ENCODE measurements at regions of chr19 and their contacts with region 1.

Region 1: GRCh38 chr19:6516659-6517291 is 14.1 kb upstream of the TNFSF9 start:
- DNase-seq: no peak
- ATAC-seq: peak; percentile 83
- H3K4me3 ChIP-seq: peak overlapping the region; percentile 92
- H3K27ac ChIP-seq: peak overlapping the region; percentile 98
- H3K4me1 ChIP-seq: peaks cover 33% of the 10 kb centered on the region
- H3K27me3 ChIP-seq: no peaks in the 10 kb centered on the region
- CTCF ChIP-seq: peak; percentile 96 to 99 (median 97); a peak in 5 of 6 replicates
- EP300 ChIP-seq: 0 out of 4 replicates have a peak, but pooled peaks of 1 of the 2 experiments have one; percentile 13
- POLR2A ChIP-seq: peak; percentile 63; the same call in 1 of the 2 replicates
- RAD21 ChIP-seq: peak; percentile 100

Region 2: GRCh38 chr19:6481541-6482342 is 35.0 kb before region 1 on chr19 and contains the start of gene DENND1C:
- CTCF ChIA-PET with region 1: interaction called, 3 read pairs
- POLR2A ChIA-PET with region 1: interaction called, 7 read pairs
- RAD21 ChIA-PET with region 1: interaction called, 20 read pairs
- SMC1A ChIA-PET with region 1: interaction called, 4 read pairs
- in situ Hi-C with region 1: no loop called
- intact Hi-C with region 1: no loop called
- DNase-seq: peak; percentile 45
- ATAC-seq: peak; percentile 95
- H3K4me3 ChIP-seq: peak within 1 kb of the TSS; percentile 69
- H3K27ac ChIP-seq: peak within 1 kb of the TSS; percentile 93
- H3K4me1 ChIP-seq: peaks cover 10% of the 10 kb centered on the region
- H3K27me3 ChIP-seq: no peaks in the 10 kb centered on the region
- CTCF ChIP-seq: peak; percentile 51 to 64 (median 61); a peak in 4 of 6 replicates
- EP300 ChIP-seq: no peak
- POLR2A ChIP-seq: peak; percentile 82
- RAD21 ChIP-seq: peak; percentile 53
- polyA plus RNA-seq, gene DENND1C: 2.4 to 2.8 TPM

Region 3: DNA sequence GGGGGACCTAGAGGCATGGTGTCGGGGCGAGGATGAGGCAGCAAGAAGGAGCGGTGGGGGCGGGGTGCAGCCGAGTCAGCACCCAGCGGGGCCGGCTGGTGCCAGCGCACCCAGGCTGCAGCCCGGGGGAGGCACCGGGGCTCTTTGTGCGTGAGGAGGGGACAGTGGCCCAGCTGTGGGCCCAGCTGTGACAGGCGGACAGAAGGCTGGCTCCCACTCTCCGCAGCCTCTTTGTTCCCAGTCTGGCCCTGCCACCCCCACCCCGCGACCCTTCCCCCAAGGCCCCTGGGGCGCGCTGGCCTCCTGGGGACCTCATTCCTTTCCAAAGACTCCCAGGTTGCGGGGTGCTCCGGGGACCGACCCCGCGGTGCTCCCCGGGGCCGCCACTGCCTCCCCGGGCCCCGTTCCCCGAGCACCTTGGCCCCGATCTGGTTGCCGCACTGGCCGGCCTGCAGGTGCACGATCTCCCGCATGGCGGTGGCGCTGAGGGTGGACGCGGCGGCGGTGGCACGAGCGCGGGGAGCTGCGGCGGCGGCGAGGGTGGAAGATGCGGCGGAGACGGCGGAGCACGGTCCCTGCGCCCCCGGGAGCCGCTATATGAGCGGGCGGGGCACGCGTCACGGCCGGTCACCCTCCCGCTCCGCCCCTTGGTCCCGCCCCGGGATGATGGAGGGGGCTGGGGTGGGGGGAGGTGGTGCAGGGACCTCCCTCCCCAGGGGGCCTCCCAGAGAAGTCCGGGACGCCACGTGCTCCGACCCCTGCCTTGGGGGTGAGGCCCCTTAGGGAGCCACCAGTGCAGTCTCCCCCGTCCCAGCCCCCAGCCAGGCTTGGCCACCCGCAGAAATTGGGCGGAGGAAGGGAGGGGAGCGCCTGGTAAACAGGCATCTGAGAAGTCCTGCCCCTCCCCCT is 14.8 kb before region 1 on chr19 and contains the start of gene TUBB4A:
- CTCF ChIA-PET with region 1: no interaction called
- POLR2A ChIA-PET with region 1: no interaction called
- RAD21 ChIA-PET with region 1: no interaction called
- SMC1A ChIA-PET with region 1: no interaction called
- in situ Hi-C with region 1: no loop called
- intact Hi-C with region 1: no loop called
- DNase-seq: no peak
- ATAC-seq: peak; percentile 77
- H3K4me3 ChIP-seq: peak within 1 kb of the TSS; percentile 71
- H3K27ac ChIP-seq: no peak within 1 kb of the TSS
- H3K4me1 ChIP-seq: peaks cover 2% of the 10 kb centered on the region
- H3K27me3 ChIP-seq: peaks cover 0 to 2% of the 10 kb centered on the region in 2 experiments; a peak in 3 of 4 replicates
- CTCF ChIP-seq: peak in 1 of 3 experiments; percentile 14; a peak in 1 of 6 replicates
- EP300 ChIP-seq: no peak
- POLR2A ChIP-seq: peak; percentile 70
- RAD21 ChIP-seq: no peak
- polyA plus RNA-seq, gene TUBB4A: 0.79 to 0.85 TPM

Region 4: DNA sequence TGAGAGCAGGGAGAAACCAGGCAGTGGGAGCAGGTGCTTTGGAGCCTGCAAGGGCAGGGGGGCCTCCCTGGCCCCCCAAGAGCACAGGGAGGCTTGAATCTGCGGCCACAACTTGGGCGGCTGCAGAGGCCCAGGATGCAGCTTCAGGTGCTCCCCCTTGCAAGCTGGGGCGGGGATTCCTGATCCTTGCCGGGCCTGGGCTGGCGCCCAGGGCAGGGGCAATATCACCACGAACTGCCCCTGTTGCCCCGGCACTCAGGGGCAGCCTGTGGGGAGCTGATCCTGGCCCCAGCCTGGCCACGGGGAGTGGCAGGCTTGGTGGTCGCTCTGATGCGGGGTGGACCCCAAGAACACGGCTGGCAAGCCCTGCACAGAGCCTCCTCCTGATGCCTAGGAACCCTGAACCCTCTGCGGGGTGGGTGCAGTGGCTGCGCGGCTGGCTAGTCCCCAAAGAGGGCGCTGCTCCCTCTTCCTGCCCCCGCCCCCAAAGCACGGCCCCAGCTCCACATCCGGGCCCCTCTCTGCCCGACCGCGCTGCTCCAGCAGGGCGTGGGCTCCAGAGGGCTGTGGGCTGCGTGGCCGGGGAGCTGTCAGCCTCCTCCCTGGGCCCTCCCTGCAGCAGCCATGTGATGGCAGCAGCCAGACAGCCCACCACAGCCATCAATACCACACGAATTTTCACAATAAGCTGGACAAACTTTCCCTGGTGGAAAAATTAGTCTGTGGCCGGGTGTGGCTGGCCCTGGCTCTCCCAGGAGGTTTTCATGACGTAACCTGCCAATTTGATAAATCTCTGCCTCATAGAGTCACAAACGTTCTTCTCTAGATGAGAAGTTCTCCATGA is 35.1 kb after region 1 on chr19:
- CTCF ChIA-PET with region 1: interaction called, 14 read pairs
- POLR2A ChIA-PET with region 1: interaction called, 5 read pairs
- RAD21 ChIA-PET with region 1: interaction called, 8 read pairs
- SMC1A ChIA-PET with region 1: interaction called, 8 read pairs
- in situ Hi-C with region 1: no loop called
- intact Hi-C with region 1: loop called (anchors 2 kb)
- DNase-seq: no peak
- ATAC-seq: peak; percentile 91
- H3K4me3 ChIP-seq: no peak overlapping the region; the same call in 1 of the 2 replicates
- H3K27ac ChIP-seq: peak overlapping the region; percentile 72
- H3K4me1 ChIP-seq: peaks cover 35% of the 10 kb centered on the region
- H3K27me3 ChIP-seq: no peaks in the 10 kb centered on the region
- CTCF ChIP-seq: peak; percentile 23 to 60 (median 47)
- EP300 ChIP-seq: peak; percentile 25 to 36; a peak in 1 of 4 replicates
- POLR2A ChIP-seq: peak; percentile 63
- RAD21 ChIP-seq: peak; percentile 40

Region 5: GRCh38 chr19:6602729-6603114 is 85.9 kb after region 1 on chr19:
- CTCF ChIA-PET with region 1: interaction called, 13 read pairs
- POLR2A ChIA-PET with region 1: interaction called, 20 read pairs
- RAD21 ChIA-PET with region 1: interaction called, 31 read pairs
- SMC1A ChIA-PET with region 1: interaction called, 14 read pairs
- in situ Hi-C with region 1: no loop called
- intact Hi-C with region 1: loop called (anchors 1 kb)
- DNase-seq: no peak
- ATAC-seq: peak; percentile 14
- H3K4me3 ChIP-seq: peak overlapping the region; percentile 76; the same call in 1 of the 2 replicates
- H3K27ac ChIP-seq: peak overlapping the region; percentile 95
- H3K4me1 ChIP-seq: peaks cover 27% of the 10 kb centered on the region
- H3K27me3 ChIP-seq: no peaks in the 10 kb centered on the region
- CTCF ChIP-seq: no peak
- EP300 ChIP-seq: no peak
- POLR2A ChIP-seq: no peak
- RAD21 ChIP-seq: no peak

Region 6: GRCh38 chr19:6674868-6675305 is 158.1 kb after region 1 on chr19:
- CTCF ChIA-PET with region 1: interaction called, 3 read pairs
- POLR2A ChIA-PET with region 1: interaction called, 15 read pairs
- RAD21 ChIA-PET with region 1: interaction called, 8 read pairs
- SMC1A ChIA-PET with region 1: interaction called, 4 read pairs
- in situ Hi-C with region 1: no loop called
- intact Hi-C with region 1: loop called (anchors 2 kb)
- DNase-seq: peak; percentile 87
- ATAC-seq: peak; percentile 75
- H3K4me3 ChIP-seq: peak overlapping the region; percentile 40; the same call in 1 of the 2 replicates
- H3K27ac ChIP-seq: peak overlapping the region; percentile 69
- H3K4me1 ChIP-seq: peaks cover 35% of the 10 kb centered on the region
- H3K27me3 ChIP-seq: no peaks in the 10 kb centered on the region
- CTCF ChIP-seq: peak in 2 of 3 experiments; percentile 30 to 36; a peak in 4 of 6 replicates
- EP300 ChIP-seq: peak; percentile 75 to 83
- POLR2A ChIP-seq: 0 out of 2 replicates have a peak, but pooled peaks have one; percentile 37
- RAD21 ChIP-seq: peak; percentile 23; the same call in 1 of the 2 replicates

Region 7: DNA sequence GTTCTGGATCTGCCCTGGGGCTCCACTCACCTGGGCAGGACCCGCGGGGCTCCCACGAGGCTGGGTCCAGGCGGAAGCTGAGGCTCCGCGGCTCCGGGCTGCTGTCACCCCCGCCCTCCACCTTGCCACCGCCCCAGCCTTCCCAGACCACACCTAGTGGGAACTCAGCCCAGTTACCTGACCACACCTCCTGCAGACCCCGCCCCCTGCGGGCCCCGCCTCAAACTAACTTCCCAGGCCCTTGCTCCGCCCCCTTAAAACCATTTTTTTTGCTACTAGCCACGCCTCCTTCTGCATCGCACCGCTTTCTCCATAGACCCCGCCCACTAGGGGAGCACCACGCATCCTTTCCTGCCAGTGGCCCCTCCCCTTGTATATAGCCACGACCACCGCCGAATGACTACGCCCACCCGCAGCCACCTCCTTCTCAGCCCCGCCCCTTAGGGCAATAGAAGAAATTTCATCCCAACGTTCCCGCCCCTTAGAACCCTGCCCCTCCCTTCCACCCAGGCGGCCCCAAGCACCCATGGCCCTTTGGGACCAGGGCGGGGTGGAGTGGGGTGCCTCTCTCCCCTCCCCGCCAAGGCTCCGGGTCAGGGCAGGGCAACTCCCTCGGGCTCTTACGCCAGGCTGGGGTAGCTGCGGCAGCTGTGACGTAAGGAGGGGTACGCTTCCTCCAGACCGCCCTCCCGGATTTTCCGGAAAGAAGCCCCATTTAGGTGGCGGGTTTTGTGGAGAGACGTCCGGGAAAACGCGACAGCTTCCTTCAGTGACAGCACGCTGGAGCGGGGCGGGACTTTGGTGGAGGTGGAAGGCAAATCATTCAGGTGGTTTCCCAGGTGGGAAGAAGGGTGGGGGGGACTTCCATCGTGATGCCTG is 250.8 kb after region 1 on chr19 and contains the start of gene SH2D3A:
- CTCF ChIA-PET with region 1: interaction called, 5 read pairs
- POLR2A ChIA-PET with region 1: interaction called, 6 read pairs
- RAD21 ChIA-PET with region 1: interaction called, 20 read pairs
- SMC1A ChIA-PET with region 1: interaction called, 8 read pairs
- in situ Hi-C with region 1: no loop called
- intact Hi-C with region 1: loop called (anchors 2 kb)
- DNase-seq: peak; percentile 92
- ATAC-seq: peak; percentile 79
- H3K4me3 ChIP-seq: peak within 1 kb of the TSS; percentile 85
- H3K27ac ChIP-seq: peak within 1 kb of the TSS; percentile 83
- H3K4me1 ChIP-seq: peaks cover 23% of the 10 kb centered on the region
- H3K27me3 ChIP-seq: no peaks in the 10 kb centered on the region
- CTCF ChIP-seq: no peak
- EP300 ChIP-seq: no peak; a peak in 1 of 4 replicates
- POLR2A ChIP-seq: peak; percentile 70; the same call in 1 of the 2 replicates
- RAD21 ChIP-seq: no peak
- polyA plus RNA-seq, gene SH2D3A: 0.77 to 1.4 TPM

Measured in GM12878 (cell line).